ENCODE measurements at regions of chr10 and their contacts with region 1.

Region 1: GRCh38 chr10:30591249-30591670 is 38.3 kb downstream of the LYZL2 start:
- DNase-seq: no peak
- ATAC-seq: peak; percentile 68

Region 2: DNA sequence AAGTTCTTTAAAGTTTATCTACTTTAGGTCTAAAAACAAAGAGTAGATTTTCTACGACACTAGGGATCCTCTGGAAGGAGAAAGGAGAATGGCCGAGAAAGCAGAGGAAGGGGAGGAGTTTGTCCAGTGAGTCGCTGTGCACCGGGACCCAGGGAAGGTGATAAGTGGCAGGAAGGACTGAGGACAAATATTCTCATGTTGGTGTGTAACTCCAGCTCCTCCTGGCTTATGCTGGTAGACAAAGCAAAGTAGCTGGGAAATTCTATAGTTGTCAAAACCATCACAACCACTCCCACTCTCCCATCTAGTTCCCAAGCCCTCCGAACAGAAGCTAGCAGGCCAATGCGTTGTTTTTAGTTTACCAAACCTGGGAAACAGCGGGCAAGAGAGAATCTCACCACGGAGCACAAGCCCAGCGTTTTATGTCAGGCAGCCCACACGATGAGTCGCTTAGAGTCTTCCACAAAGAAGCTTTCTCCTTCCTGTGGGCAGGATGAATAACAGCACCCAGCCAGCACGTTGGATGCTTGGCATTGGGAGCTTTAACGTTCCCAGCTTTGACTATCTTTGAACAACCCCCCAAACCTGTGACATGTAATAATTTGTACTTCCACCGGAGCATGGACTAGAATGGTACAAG is 499.0 kb before region 1 on chr10:
- intact Hi-C with region 1: no loop called
- DNase-seq: no peak
- ATAC-seq: no peak

Region 3: DNA sequence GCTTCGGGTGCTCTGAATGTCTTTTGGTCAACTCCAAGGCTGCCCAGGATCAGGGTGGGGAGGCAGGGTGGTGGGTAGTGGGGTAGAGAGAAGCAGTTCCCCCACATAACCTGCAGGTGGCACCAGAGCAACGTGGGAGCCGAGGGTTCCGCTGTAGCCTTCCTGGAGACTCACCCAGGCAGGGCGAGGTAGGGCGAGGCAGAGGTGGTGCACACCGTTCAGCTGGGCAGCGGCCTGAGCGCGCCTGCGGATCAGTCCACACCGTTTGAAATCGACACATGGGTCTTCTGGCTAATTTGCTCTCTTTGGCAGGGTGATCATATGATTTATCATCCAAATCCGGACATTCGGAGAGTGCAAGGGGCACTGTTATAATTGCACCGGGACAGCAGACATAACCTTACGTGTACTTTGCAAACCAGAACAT is 198.7 kb before region 1 on chr10:
- intact Hi-C with region 1: loop called (anchors 2 kb)
- DNase-seq: peak; percentile 81
- ATAC-seq: peak; percentile 98

Region 4: DNA sequence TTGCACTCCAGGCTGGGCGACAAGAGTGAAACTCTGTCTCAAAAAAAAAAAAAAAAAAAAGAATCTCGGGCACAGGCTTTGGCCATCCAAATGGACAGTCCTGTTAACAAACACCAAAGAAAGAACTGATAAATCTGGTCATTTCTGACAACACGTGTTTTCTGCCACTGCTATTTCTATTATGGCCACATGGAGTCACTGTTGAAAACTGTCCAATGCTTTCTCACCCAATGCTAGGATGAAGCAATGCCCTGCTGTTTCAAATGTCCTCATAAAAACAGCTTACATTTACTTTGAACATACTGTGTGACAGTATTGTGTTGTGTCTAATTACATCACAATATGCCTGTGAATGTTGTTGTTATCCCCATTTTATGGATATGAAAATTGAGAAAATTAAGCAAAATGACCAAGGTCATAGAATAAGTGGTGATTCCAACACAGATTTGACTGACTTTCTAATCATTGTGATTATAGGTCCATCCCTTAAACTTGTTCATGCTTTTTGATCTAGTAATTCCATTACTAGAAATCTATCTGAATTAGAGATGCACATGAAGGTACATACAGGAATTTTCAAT is 177.2 kb before region 1 on chr10:
- intact Hi-C with region 1: loop called (anchors 5 kb)
- DNase-seq: no peak
- ATAC-seq: peak; percentile 86

Region 5: GRCh38 chr10:30709229-30709628 is 118.0 kb after region 1 on chr10:
- intact Hi-C with region 1: no loop called
- DNase-seq: no peak
- ATAC-seq: no peak